Gastrocnemius medialis (tissue), 4 donors: ENCODE measurements at regions of chr18 and their contacts with region 1.

Region 1: DNA sequence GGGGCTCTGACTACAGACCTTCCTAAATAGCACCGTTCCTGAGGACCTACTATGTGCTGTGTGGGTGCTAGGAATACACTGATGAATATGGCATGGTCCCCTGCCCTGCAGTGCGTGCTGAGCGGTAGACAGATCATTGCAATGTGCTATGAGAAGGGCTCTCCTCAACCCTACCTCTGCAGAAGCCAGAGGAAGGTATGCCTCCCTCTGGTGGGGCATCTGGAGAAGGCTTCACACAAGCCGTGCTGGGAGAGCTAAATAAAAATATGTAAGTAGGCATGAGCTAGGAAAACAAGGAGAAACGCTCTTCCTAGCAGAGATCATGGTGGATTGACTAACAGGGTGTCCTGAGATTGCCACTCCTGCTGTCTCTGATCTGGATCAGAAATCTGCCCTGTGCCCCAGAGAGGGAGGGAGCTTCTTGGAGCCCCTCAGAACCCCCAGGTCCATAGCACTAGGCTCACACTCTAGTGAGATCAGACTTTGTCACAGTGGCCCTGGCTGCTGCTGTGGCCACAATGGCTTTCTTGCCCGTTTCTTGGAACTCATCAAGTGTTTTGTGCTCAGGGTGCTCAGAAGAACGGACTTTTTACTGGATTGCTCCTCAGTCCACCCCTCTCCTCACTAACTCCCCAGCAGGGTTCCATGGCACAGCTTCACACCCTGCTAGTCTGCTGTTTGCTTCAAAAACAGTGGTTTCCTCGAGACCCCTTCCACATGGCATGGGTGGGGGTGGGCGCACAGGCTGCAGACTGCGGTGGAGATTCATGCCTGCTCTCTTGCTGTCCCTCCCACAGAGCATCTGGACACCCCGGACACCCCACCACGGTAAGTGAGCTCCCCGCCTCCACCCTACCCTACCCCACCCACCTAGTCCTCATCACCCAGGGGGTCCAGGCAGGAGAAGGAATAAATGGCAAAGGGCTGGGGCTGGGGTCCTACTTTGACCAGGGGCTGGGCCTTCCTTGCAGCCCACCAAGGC is 14.2 kb downstream of the SIGLEC15 start:
- DNase-seq: no peak
- ATAC-seq: peak in 1 of 2 donors; percentile 49
- H3K4me3 ChIP-seq: no peak overlapping the region
- H3K27ac ChIP-seq: no peak overlapping the region
- H3K4me1 ChIP-seq: peaks cover 4 to 7% of the 10 kb centered on the region in 2 donors
- H3K27me3 ChIP-seq: peaks cover 39 to 42% (median 40%) of the 10 kb centered on the region in 3 donors
- CTCF ChIP-seq: peak in 2 of 5 experiments; percentile 12 to 27
- POLR2A ChIP-seq: no peak

Region 2: DNA sequence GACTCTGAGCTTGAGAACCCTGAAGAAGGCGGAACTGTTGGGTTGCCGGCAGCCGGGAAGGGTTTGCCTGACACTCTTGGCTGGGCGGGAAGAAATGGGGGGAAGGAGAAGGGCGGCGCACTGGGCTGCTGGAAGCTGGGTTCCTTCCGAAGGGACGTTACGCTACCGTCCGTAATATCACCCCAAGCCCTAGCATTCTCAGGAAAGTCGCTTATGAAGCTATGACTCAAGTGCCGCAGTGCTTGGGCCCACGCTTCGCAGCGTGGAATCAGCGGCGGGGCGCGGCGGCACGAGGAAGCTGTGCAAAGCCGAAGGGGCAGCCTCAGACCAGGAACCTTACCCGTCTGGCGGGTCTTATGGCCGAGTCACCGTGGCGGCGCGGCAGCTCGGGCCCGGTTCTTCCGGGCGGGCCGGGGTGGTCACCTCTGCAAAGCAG is 64.4 kb before region 1 on chr18:
- in situ Hi-C with region 1: loop called in 1 of 4 experiments (anchors 10 kb)
- intact Hi-C with region 1: no loop called
- DNase-seq: peak; percentile 19 to 26
- ATAC-seq: peak; percentile 24 to 33
- H3K4me3 ChIP-seq: peak overlapping the region; percentile 50 to 62 (median 56)
- H3K27ac ChIP-seq: peak overlapping the region in 3 of 4 donors; percentile 42 to 47 (median 42)
- H3K4me1 ChIP-seq: peaks cover 4 to 7% of the 10 kb centered on the region in 2 donors
- H3K27me3 ChIP-seq: peaks cover 3 to 15% (median 4%) of the 10 kb centered on the region in 3 donors
- CTCF ChIP-seq: no peak
- POLR2A ChIP-seq: no peak

Region 3: DNA sequence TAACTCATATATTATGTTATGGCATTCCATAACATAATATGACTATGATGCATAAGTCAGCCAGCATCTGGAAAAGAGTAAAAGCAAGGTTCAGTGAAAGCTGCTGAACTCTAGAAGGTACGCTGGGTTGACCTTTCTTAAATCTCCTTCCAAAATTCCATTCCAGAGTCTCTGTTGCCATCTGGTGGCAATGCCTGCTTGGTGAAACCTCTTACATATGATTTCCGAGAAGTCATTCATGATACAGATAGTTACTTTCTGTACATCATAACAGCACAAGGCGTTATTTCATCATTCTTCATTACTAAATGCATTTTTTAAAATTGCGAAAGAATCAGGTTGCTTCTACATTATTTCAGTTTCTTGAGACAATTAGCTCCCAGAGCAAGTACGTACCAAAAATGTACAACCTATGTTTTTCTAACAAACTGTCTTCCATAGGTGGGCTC is 134.4 kb after region 1 on chr18:
- in situ Hi-C with region 1: no loop called
- intact Hi-C with region 1: no loop called
- DNase-seq: peak; percentile 26 to 54
- ATAC-seq: peak; percentile 83 to 94
- H3K4me3 ChIP-seq: peak overlapping the region in 1 of 4 donors; percentile 23
- H3K27ac ChIP-seq: no peak overlapping the region
- H3K4me1 ChIP-seq: peaks cover 0 to 3% of the 10 kb centered on the region in 2 donors
- H3K27me3 ChIP-seq: no peaks in the 10 kb centered on the region
- CTCF ChIP-seq: peak; percentile 47 to 78 (median 71)
- POLR2A ChIP-seq: no peak